WTC11 (cell line): ENCODE measurements at regions of chr11 and their contacts with region 1.

Region 1: GRCh38 chr11:117796872-117797529 is at the start of gene DSCAML1:
- DNase-seq: peak; percentile 66
- ATAC-seq: peak; percentile 74
- H3K4me3 Mint-ChIP-seq: peak within 1 kb of the TSS; percentile 74
- H3K27ac Mint-ChIP-seq: no peak within 1 kb of the TSS
- H3K4me1 Mint-ChIP-seq: peaks cover 15% of the 10 kb centered on the region
- H3K27me3 Mint-ChIP-seq: peaks cover 73% of the 10 kb centered on the region
- CTCF ChIP-seq: no peak
- total RNA-seq, gene DSCAML1: 0.25 to 0.90 TPM (median 0.82 TPM) in 3 replicates

Region 2: GRCh38 chr11:117807482-117808327 is 10.7 kb after region 1 on chr11:
- CTCF ChIA-PET with region 1: interaction called, 23 read pairs
- POLR2A ChIA-PET with region 1: interaction called, 3 read pairs
- DNase-seq: peak; percentile 85
- ATAC-seq: peak; percentile 69
- H3K4me3 Mint-ChIP-seq: no peak overlapping the region
- H3K27ac Mint-ChIP-seq: no peak overlapping the region
- H3K4me1 Mint-ChIP-seq: no peaks in the 10 kb centered on the region
- H3K27me3 Mint-ChIP-seq: peaks cover 8% of the 10 kb centered on the region
- CTCF ChIP-seq: peak; percentile 85